ENCODE measurements at regions of chr18 and their contacts with region 1.

Region 1: DNA sequence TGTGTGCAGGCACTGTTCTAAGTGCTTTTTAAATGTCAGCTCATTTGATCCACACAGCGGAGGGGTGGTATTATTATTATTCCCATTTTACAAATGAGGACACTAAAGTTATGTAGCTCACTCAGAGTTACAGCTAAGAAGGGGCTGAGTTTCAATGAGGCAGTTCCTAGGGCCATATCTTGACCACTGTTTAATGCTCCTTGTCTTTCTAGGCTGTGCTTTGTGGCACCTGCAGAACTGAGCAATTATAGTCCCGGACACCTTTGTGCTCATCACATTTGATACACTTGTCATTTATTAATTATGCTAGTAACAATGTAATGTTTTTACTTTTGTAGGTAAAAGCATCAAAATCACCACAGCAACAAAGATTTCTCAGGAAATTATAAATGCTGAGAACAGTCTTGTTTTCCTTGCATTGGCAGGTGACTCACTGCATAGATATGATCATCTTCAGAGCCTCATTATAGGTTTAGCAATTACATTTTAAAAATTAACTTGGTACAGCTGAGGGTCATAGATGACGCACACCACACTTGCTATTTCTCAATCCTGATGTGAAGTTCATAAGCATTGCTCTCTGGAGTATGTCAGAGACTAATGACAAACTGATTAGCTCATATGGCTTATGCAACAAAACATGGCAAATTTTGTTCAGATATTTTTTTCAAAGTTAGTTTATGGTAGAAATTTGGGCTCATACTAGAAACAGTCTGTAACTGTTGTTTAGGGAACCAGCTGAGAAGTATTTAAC is 366.8 kb downstream of the TGIF1 start:
- DNase-seq: peak; percentile 28
- H3K4me3 Mint-ChIP-seq: no peak overlapping the region
- H3K27ac Mint-ChIP-seq: peak overlapping the region; percentile 81
- H3K4me1 Mint-ChIP-seq: peaks cover 50% of the 10 kb centered on the region
- H3K27me3 Mint-ChIP-seq: no peaks in the 10 kb centered on the region
- CTCF ChIP-seq: no peak

Region 2: DNA sequence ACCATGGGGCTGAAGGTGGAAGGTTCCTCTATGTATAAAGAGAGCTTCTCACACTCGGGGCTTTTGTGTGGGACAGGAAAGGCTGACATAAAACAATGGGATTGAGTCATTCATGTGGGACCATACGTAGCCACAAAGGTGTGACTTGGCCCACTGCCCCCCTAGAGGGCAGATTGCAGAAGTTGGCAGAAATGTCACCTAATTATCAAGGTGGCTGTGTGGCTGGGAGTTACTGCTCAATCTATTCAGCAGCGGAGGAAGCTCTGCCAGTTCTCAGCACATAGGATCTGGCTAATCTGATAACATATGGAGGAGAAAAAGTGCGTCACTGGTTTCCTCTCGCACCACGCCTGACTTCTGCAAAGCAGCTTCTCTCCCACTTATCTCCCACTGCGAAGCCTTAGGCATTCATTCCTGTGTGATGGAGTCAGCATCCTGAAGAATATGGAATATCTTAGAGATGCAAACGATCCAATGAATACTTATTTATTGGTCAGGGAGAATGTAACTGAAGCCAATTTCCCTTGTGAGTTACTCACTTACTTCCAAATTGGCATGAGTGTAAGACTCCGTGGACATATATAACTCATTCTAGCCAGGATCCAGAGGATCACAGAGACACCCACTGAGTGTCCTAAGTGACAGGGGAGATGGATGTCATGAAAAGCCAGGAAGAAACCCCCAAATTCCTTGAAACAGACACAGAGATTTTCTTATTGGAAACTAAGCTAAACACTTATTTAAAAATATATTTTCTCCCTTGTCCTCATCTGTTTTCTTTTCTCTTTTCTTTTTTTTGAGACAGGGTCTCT is 22.0 kb before region 1 on chr18:
- CTCF ChIA-PET with region 1: interaction called, 7 read pairs
- intact Hi-C with region 1: loop called (anchors 2 kb)
- DNase-seq: peak; percentile 75
- H3K4me3 Mint-ChIP-seq: peak overlapping the region; percentile 6
- H3K27ac Mint-ChIP-seq: peak overlapping the region; percentile 9
- H3K4me1 Mint-ChIP-seq: peaks cover 41% of the 10 kb centered on the region
- H3K27me3 Mint-ChIP-seq: no peaks in the 10 kb centered on the region
- CTCF ChIP-seq: no peak

Region 3: GRCh38 chr18:3914833-3915610 is 98.2 kb after region 1 on chr18:
- CTCF ChIA-PET with region 1: no interaction called
- intact Hi-C with region 1: no loop called
- DNase-seq: no peak
- H3K4me3 Mint-ChIP-seq: no peak overlapping the region
- H3K27ac Mint-ChIP-seq: no peak overlapping the region
- H3K4me1 Mint-ChIP-seq: no peaks in the 10 kb centered on the region
- H3K27me3 Mint-ChIP-seq: no peaks in the 10 kb centered on the region
- CTCF ChIP-seq: no peak

Measured in Calu3 (cell line).